Activated naive CD4-positive, alpha-beta T cell treated with anti-CD3 and anti-CD28 coated beads, Interleukin-2, amount 10 ng/mL, durations not matched to agents 7 days and 5 days (primary cell): ENCODE measurements at regions of chr13 and their contacts with region 1.

Region 1: DNA sequence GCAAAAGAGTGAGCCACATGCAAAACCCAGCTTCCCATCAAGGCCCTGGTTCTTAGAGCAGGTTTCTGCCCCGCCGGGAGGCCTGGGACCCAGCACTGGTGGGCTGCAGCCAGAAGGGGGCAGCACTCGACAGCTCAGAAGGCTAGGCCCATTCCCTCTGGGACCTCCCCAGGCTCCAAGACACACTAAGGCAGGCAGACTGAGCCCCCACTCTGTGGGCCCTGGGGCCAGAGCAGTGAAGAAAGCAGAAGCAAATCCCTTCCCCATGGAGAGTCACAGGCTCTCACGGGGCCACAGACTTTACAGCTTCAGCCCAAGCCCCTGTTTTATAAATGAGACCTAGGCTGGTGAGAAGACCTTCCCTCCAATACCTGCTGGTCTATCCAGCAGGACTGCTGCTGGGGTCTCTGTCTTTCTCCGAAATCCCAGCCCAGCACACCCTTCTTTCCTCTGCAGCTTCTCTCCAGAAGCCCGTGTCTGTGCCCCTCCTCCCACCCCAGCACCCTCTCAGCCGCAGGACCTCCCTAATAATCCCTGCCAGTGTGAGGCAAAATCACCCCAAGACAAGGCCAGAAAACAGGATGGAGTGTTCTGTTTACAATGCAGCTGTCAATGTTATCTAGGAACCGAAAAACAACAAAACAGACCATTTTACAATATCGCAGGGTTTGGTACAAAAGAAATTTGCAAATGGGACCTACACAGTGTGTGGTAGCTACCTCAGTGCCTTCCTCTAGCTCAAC is 109.3 kb downstream of the ABCC4 start:
- DNase-seq: peak; percentile 71
- H3K4me3 Mint-ChIP-seq: no peak overlapping the region
- H3K27ac Mint-ChIP-seq: peak overlapping the region; percentile 49
- H3K4me1 Mint-ChIP-seq: peaks cover 20% of the 10 kb centered on the region
- H3K27me3 Mint-ChIP-seq: no peaks in the 10 kb centered on the region

Region 2: GRCh38 chr13:95301183-95301967 is 109.4 kb after region 1 on chr13 and contains the start of gene ABCC4:
- CTCF ChIA-PET with region 1: interaction called, 12 read pairs
- DNase-seq: peak; percentile 66
- H3K4me3 Mint-ChIP-seq: peak within 1 kb of the TSS; percentile 77
- H3K27ac Mint-ChIP-seq: no peak within 1 kb of the TSS
- H3K4me1 Mint-ChIP-seq: peaks cover 21% of the 10 kb centered on the region
- H3K27me3 Mint-ChIP-seq: peaks cover 19% of the 10 kb centered on the region

Region 3: GRCh38 chr13:95378603-95379002 is 186.6 kb after region 1 on chr13:
- CTCF ChIA-PET with region 1: interaction called, 135 read pairs
- DNase-seq: no peak
- H3K4me3 Mint-ChIP-seq: no peak overlapping the region
- H3K27ac Mint-ChIP-seq: no peak overlapping the region
- H3K4me1 Mint-ChIP-seq: peaks cover 6% of the 10 kb centered on the region
- H3K27me3 Mint-ChIP-seq: peaks cover 6% of the 10 kb centered on the region

Region 4: GRCh38 chr13:95403828-95404522 is 212.0 kb after region 1 on chr13:
- CTCF ChIA-PET with region 1: interaction called, 207 read pairs
- DNase-seq: peak; percentile 83
- H3K4me3 Mint-ChIP-seq: peak overlapping the region; percentile 78
- H3K27ac Mint-ChIP-seq: no peak overlapping the region
- H3K4me1 Mint-ChIP-seq: peaks cover 12% of the 10 kb centered on the region
- H3K27me3 Mint-ChIP-seq: peaks cover 14% of the 10 kb centered on the region

Region 5: GRCh38 chr13:95480131-95480545 is 288.1 kb after region 1 on chr13:
- CTCF ChIA-PET with region 1: interaction called, 25 read pairs
- DNase-seq: no peak
- H3K4me3 Mint-ChIP-seq: no peak overlapping the region
- H3K27ac Mint-ChIP-seq: no peak overlapping the region
- H3K4me1 Mint-ChIP-seq: peaks cover 17% of the 10 kb centered on the region
- H3K27me3 Mint-ChIP-seq: peaks cover 13% of the 10 kb centered on the region